ENCODE measurements at regions of chr6 and their contacts with region 1.

Region 1: DNA sequence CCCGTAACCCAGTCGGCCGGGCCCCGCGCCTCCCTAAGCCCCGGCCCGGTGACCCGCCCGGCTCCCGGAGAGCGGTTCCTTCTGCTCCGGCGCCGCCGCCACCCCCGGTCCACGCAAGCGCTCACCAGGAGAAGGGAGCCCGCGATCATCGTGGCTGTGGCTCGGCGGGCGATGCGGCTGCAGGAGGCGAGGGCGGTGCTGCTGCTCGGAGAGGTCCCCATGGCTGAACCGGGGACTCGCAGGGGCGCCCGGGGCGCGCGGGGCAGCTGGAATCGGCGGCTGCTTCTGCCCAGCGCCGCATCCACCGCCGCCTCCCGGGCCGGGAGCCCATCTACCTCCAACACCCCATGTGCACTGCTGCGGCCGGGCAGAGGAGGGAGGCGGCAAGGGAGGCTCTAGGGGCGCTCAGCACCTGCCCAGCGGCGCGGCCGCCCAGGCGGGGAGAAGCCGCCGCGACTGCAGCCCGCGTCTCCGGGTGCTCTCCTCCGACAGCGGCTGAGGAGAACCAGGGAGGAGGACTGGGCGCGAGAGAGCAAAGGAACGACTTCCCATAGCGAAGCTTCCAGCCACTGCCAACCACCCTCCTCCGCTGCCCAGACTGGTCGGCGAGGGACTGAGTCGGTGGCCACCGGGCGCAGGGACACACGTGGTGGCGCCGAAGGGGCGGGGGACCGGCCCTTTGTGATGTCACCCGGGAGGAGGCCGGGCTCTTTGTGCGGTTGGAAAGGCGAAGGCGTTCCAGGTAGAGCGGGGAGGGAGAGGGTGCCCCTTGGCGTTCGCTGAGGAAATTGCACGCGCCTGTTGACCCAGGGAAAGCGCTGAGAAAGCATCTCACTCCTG is at the start of gene TNFRSF21:
- DNase-seq: peak; percentile 95
- ATAC-seq: peak; percentile 89
- H3K4me3 ChIP-seq: peak within 1 kb of the TSS; percentile 95
- H3K27ac ChIP-seq: peak within 1 kb of the TSS; percentile 81
- H3K4me1 ChIP-seq: peaks cover 33% of the 10 kb centered on the region
- H3K27me3 ChIP-seq: no peaks in the 10 kb centered on the region
- CTCF ChIP-seq: peak; percentile 85
- total RNA-seq, gene TNFRSF21: 106 and 120 TPM in 2 replicates

Region 2: DNA sequence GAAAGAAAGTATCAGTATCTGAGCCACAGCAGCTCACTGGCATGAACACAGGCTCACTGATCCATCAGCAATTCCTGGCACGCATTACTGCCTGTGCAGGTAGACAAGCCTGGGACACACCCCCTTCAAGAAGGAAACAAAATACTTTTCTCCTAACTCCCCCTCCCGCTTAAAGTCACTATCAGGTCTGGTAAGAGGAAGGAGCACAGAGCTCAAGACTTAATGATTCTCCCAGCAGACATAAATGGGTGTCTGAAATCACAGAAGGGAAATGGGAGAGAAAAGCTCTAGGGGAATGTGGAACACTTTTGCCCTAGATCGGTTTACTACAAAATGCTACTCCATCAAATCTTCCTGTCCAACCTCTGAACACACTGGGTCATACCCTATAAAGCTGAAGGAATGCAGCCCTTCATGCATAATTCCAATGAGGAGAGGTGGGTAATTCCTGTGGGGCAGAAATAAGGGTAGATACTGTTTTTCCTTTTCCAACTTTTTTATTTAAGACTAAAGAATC is 267.2 kb before region 1 on chr6 and contains the start of gene ADGRF1:
- CTCF ChIA-PET with region 1: no interaction called
- POLR2A ChIA-PET with region 1: interaction called, 10 read pairs
- intact Hi-C with region 1: loop called (anchors 5 kb)
- DNase-seq: peak; percentile 91
- ATAC-seq: peak; percentile 48
- H3K4me3 ChIP-seq: peak within 1 kb of the TSS; percentile 72
- H3K27ac ChIP-seq: peak within 1 kb of the TSS; percentile 95
- H3K4me1 ChIP-seq: peaks cover 64% of the 10 kb centered on the region
- H3K27me3 ChIP-seq: no peaks in the 10 kb centered on the region
- CTCF ChIP-seq: no peak
- total RNA-seq, gene ADGRF1: 82.6 and 104 TPM in 2 replicates

Region 3: GRCh38 chr6:47097092-47097945 is 212.2 kb before region 1 on chr6:
- CTCF ChIA-PET with region 1: interaction called, 3 read pairs
- POLR2A ChIA-PET with region 1: no interaction called
- intact Hi-C with region 1: loop called (anchors 1 kb)
- DNase-seq: peak; percentile 88
- ATAC-seq: peak; percentile 80
- H3K4me3 ChIP-seq: no peak overlapping the region
- H3K27ac ChIP-seq: peak overlapping the region; percentile 53
- H3K4me1 ChIP-seq: peaks cover 50% of the 10 kb centered on the region
- H3K27me3 ChIP-seq: no peaks in the 10 kb centered on the region
- CTCF ChIP-seq: peak; percentile 90

Region 4: GRCh38 chr6:47188588-47189021 is 120.9 kb before region 1 on chr6:
- CTCF ChIA-PET with region 1: no interaction called
- POLR2A ChIA-PET with region 1: no interaction called
- intact Hi-C with region 1: loop called (anchors 1 kb)
- DNase-seq: peak; percentile 97
- ATAC-seq: peak; percentile 91
- H3K4me3 ChIP-seq: 0 out of 2 replicates have a peak overlapping the region, but pooled peaks have one; percentile 25
- H3K27ac ChIP-seq: peak overlapping the region; percentile 82
- H3K4me1 ChIP-seq: peaks cover 33% of the 10 kb centered on the region
- H3K27me3 ChIP-seq: no peaks in the 10 kb centered on the region
- CTCF ChIP-seq: no peak

Region 5: DNA sequence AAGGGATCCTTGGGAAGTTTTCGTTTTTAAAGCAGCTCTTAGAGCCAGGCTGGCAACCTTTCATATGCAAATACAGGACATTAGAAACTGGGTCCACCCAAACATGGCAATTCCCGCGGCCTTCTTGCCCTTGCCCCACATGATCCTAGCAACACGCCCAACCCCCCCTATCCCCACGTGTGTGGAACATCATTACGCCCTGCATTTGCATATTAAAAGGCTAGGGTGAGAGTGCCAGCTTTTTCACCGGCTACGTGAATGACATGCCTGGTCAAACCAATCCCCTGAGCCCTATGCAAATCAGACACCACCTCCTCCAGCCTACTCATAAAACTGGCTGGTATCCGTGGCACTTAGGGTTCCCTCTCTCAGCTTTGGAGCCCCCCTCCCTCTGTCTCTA is 87.9 kb before region 1 on chr6:
- CTCF ChIA-PET with region 1: no interaction called
- POLR2A ChIA-PET with region 1: no interaction called
- intact Hi-C with region 1: no loop called
- DNase-seq: no peak
- ATAC-seq: no peak
- H3K4me3 ChIP-seq: no peak overlapping the region
- H3K27ac ChIP-seq: no peak overlapping the region
- H3K4me1 ChIP-seq: no peaks in the 10 kb centered on the region
- H3K27me3 ChIP-seq: no peaks in the 10 kb centered on the region
- CTCF ChIP-seq: no peak

Region 6: GRCh38 chr6:47366335-47366890 is 56.9 kb after region 1 on chr6:
- CTCF ChIA-PET with region 1: no interaction called
- POLR2A ChIA-PET with region 1: no interaction called
- intact Hi-C with region 1: loop called (anchors 5 kb)
- DNase-seq: peak; percentile 81
- ATAC-seq: peak; percentile 96
- H3K4me3 ChIP-seq: no peak overlapping the region
- H3K27ac ChIP-seq: peak overlapping the region; percentile 65
- H3K4me1 ChIP-seq: peaks cover 31% of the 10 kb centered on the region
- H3K27me3 ChIP-seq: no peaks in the 10 kb centered on the region
- CTCF ChIP-seq: no peak

Region 7: DNA sequence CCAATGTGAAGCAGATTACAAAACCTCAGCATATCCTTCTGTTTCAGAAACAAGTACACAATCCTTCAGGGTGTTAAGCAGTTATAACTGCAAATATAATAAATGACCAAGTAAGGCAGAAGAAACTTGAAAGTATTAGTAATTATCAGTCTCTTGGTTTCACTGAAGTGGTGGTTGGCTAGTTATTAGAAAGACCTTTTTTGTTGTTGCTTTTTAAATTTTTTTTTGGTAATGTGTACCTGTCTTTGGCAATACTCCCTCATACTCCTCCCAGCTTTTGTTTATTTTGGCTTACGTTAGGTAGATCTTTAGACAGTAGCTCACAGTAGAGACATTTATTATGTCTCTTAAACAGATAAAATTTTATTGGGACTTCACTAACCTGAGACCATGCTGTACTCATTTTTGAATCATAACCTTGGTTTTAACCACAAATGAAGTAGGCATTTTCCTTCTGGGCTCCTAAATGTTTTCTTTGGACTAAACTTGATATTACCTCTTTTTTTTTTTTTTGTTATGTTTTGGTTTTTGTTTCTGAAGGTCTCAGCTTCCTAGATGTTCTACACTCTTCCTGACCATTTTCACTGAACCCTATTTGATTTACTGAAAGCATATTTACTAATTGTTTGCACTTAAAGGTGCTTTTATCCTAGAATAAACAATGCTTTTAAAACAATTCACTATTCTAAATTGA is 174.5 kb after region 1 on chr6:
- CTCF ChIA-PET with region 1: no interaction called
- POLR2A ChIA-PET with region 1: no interaction called
- intact Hi-C with region 1: loop called (anchors 10 kb)
- DNase-seq: peak; percentile 90
- ATAC-seq: peak; percentile 92
- H3K4me3 ChIP-seq: peak overlapping the region; percentile 45
- H3K27ac ChIP-seq: peak overlapping the region; percentile 75
- H3K4me1 ChIP-seq: peaks cover 49% of the 10 kb centered on the region
- H3K27me3 ChIP-seq: no peaks in the 10 kb centered on the region
- CTCF ChIP-seq: no peak

Measured in PC-3 (cell line).